ENCODE measurements at regions of chr18 and their contacts with region 1.

Region 1: DNA sequence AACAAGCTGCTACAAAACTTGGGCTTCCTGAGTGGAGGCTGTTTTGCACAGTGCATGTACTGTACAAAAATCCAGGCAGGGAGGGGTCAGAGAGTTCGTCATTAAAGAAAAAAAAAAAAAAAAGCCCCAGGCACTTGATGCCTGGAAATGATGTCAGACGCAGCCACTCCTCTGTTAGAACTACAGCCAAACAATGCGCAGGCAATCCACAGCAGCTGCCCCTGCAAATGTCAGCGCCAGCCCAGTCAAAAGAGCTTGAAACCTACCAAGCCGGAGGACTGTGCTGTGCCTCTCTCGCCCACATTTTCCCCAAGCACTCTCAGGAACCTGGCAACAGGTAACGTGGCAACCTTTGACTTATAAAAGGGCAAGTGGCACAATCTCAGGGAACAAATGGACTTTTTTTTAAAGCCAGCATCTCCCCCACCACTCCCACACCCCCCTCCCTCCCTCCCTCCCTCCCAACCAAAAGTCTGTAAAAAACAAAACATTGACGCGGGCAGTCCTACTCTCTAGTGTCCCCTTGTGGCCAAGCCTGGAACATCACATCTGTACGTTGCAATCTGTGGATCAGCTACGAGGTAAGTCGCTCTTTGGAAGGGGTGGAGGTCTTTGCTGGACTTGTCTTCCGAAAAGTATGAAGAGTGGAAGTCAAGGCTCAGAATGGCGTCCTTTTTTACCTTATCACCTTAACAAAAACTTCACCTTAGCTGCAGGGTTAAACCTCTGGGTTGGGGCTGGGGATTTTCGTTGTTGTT is 144.1 kb downstream of the TGIF1 start:
- DNase-seq: peak; percentile 88 to 93 (median 88)
- ATAC-seq: peak; percentile 87
- H3K4me3 ChIP-seq: peak overlapping the region; percentile 49
- H3K27ac ChIP-seq: peak overlapping the region; percentile 99
- H3K4me1 ChIP-seq: peaks cover 16% of the 10 kb centered on the region
- H3K27me3 ChIP-seq: no peaks in the 10 kb centered on the region

Region 2: GRCh38 chr18:3368193-3368592 is 225.9 kb before region 1 on chr18:
- intact Hi-C with region 1: no loop called
- DNase-seq: no peak
- ATAC-seq: no peak
- H3K4me3 ChIP-seq: no peak overlapping the region
- H3K27ac ChIP-seq: no peak overlapping the region
- H3K4me1 ChIP-seq: no peaks in the 10 kb centered on the region
- H3K27me3 ChIP-seq: no peaks in the 10 kb centered on the region

Region 3: DNA sequence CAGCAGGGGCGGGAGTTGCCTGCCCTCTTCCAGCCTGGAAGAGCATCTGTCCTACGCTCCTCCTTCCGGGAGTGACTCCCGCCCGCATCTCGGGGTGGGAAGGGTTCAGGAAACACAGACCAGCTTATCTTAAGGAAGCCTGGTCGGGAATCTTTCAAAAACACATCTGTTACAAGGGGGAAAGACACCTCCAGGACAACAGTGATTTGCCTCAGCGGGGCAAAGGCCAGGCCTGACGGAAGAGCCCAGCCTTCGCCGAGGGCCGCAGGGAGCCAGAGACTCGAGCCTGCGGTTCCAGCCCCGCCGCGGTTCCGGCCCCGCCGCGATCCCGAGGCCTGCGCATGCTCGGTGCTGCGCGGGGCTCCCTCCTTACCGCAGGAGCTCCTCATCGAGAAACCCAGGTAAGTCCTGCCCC is 182.2 kb before region 1 on chr18:
- intact Hi-C with region 1: no loop called
- DNase-seq: peak; percentile 36 to 77 (median 68)
- ATAC-seq: peak; percentile 86 to 87
- H3K4me3 ChIP-seq: peak overlapping the region; percentile 54
- H3K27ac ChIP-seq: no peak overlapping the region
- H3K4me1 ChIP-seq: no peaks in the 10 kb centered on the region
- H3K27me3 ChIP-seq: no peaks in the 10 kb centered on the region

Region 4: DNA sequence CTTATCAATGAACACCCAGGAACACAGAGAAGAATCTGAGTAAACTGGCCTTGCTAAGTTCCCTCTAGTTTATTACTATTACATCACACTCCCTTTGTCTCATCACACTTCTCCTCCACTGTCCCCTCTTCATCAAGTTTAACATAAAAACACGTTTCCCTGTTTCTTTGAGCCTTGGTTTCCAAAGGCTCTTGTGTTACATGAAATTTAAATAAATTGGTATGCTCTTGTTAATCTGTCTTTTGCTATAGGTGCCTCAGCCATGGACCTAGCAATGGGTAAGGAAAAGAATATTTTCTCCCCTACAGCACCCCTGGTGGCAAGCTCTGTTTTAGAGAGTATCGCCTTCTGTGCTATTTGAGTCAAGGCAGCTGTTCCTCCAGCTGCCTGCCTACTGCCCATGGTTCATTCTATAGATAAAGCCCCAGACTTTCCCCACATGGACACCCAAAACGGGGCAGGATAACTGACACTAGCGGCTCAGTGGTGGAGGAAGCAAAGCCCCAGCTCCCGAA is 112.3 kb before region 1 on chr18:
- intact Hi-C with region 1: no loop called
- DNase-seq: no peak
- ATAC-seq: peak; percentile 49 to 64
- H3K4me3 ChIP-seq: no peak overlapping the region
- H3K27ac ChIP-seq: no peak overlapping the region
- H3K4me1 ChIP-seq: no peaks in the 10 kb centered on the region
- H3K27me3 ChIP-seq: no peaks in the 10 kb centered on the region

Region 5: GRCh38 chr18:3665780-3666525 is 71.9 kb after region 1 on chr18:
- intact Hi-C with region 1: loop called in 1 of 4 experiments (anchors 5 kb)
- DNase-seq: peak; percentile 74 to 88 (median 85)
- ATAC-seq: peak; percentile 91 to 93
- H3K4me3 ChIP-seq: no peak overlapping the region
- H3K27ac ChIP-seq: peak overlapping the region; percentile 22
- H3K4me1 ChIP-seq: no peaks in the 10 kb centered on the region
- H3K27me3 ChIP-seq: no peaks in the 10 kb centered on the region